MCF 10A (cell line): ENCODE measurements at regions of chr15 and their contacts with region 1.

Region 1: DNA sequence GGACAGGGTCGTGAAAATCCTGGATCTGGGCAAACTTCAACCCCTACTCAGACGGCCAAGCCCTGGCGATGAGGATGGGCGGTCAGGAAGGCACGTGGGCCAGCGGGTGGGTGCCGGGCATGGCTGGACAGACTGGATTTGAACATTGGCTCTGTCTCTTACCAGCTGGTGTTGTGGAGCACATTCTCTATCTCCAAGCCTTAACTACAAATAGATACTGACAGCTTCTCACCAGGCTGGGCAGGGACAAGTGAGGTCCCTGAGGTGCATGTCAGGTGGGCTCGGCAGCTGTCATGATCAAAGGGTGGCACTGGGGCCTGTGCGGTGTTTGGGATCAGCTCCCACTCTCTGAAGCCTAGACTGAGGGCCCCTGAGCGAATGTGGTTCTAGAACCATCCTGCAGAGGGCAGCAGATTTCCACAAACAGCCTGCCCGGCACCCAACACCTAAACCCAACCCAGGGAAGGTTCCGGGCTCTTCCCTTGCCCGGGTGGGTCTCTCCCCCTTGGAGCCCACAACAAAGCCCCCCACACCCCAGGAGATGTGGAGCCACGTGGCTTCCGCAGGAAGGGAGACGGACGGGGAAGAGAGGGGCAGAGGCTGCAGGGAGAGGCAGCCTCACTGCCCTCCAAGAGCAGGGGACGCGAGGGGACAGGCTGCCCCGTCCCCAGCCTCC is 58.4 kb downstream of the RGMA start:
- DNase-seq: peak; percentile 81
- H3K4me3 Mint-ChIP-seq: peak overlapping the region; percentile 44
- H3K27ac Mint-ChIP-seq: peak overlapping the region; percentile 95
- H3K4me1 Mint-ChIP-seq: peaks cover 38% of the 10 kb centered on the region
- H3K27me3 Mint-ChIP-seq: no peaks in the 10 kb centered on the region
- CTCF ChIP-seq: peak; percentile 86

Region 2: DNA sequence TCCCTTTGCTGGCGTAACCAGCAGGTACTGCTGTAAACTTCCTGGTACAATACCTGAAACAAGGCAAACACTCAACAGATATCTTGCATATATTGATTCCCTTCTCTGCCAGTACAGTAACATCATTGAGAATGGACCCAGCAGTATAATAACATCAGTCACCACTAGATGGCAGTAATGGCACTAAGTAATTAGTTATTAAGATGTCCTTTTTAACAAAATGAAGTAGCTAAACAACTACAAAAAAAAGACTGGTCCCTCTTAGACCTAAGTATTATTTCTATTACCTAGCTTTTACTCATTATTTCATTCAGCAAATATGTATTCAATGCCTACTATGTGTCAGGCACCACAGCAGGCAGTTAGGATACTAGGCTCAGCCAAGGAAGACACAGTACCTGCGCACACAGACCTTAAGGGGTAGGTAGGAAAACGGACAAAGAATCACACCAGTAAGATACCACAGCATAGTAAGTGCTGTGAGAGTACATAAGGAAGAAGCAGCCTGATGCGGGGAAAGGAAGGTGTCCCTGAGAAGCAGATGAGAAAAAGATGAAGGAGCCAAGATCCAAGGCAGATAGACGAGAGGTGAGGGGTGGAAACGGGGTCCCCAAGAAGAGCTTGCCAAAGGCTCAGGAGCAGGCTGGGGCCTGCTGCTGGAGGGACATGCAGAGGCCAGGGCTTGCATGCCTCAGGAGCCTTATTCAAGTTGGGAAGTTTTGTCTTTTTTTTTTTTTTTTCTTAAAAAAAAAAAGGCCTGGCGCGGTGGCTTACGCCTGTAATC is 233.2 kb before region 1 on chr15:
- CTCF ChIA-PET with region 1: interaction called, 28 read pairs
- POLR2A ChIA-PET with region 1: interaction called, 3 read pairs
- intact Hi-C with region 1: no loop called
- DNase-seq: peak; percentile 76
- H3K4me3 Mint-ChIP-seq: no peak overlapping the region
- H3K27ac Mint-ChIP-seq: peak overlapping the region; percentile 84
- H3K4me1 Mint-ChIP-seq: peaks cover 18% of the 10 kb centered on the region
- H3K27me3 Mint-ChIP-seq: no peaks in the 10 kb centered on the region
- CTCF ChIP-seq: peak; percentile 53

Region 3: DNA sequence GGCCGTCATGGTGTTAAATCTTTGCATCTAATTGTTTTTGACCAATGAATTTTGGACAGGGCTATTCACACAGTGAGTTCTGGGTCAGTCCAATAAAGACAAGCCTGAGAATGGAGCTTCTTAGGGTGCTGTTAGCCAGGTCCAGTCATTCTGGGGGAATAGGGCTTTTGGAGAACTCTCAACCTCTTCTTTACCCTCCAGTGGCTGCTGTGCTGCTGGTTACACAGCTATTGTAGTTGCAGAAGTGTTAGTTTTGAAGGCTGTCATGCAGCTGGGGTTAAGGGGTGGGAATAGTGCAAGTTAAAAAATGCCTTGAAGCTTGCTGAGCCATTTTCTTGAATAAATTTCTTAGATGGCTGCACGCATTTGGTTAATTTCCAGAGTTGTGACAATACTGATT is 40.5 kb before region 1 on chr15:
- CTCF ChIA-PET with region 1: no interaction called
- POLR2A ChIA-PET with region 1: no interaction called
- intact Hi-C with region 1: no loop called
- DNase-seq: no peak
- H3K4me3 Mint-ChIP-seq: no peak overlapping the region
- H3K27ac Mint-ChIP-seq: no peak overlapping the region
- H3K4me1 Mint-ChIP-seq: peaks cover 6% of the 10 kb centered on the region
- H3K27me3 Mint-ChIP-seq: no peaks in the 10 kb centered on the region
- CTCF ChIP-seq: no peak

Region 4: DNA sequence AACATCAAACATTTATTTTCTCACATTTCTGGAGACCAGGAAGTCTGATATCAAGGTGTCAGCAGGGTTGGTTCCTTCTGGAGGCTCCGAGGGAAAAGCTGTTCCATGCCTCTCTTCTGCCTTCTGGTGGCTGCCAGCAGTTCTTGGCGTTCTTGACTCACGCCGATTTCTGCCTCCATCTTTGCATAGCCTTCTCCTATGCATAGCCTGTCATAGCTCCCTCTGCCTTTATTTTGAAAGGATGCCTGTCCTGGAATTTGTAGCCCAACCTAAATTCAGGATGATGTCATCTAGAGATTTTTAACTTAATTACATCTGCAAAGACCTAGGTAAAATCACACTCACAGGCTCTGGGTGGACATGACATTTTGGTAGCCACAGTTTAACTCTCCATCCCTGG is 12.0 kb before region 1 on chr15:
- CTCF ChIA-PET with region 1: interaction called, 5 read pairs
- POLR2A ChIA-PET with region 1: interaction called, 15 read pairs
- intact Hi-C with region 1: no loop called
- DNase-seq: no peak
- H3K4me3 Mint-ChIP-seq: no peak overlapping the region
- H3K27ac Mint-ChIP-seq: no peak overlapping the region
- H3K4me1 Mint-ChIP-seq: peaks cover 24% of the 10 kb centered on the region
- H3K27me3 Mint-ChIP-seq: no peaks in the 10 kb centered on the region
- CTCF ChIP-seq: no peak

Region 5: DNA sequence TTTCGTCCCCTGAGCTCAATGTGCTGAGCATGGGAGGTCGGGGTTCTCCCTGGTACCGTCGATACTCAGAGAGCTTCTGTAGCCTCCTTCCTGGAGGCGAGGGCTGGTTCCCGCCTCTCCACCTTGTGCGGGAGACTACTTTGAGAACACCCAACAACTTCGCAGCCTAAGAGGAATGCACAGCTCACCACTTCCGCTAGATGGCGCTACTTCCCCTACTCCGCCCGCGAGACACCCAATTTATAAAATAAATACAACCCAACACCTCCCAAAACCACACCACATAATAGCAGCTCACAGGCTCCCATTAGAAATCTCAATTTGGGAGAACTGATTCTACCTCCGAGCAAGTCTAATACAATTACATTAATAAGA is 57.2 kb after region 1 on chr15:
- CTCF ChIA-PET with region 1: interaction called, 20 read pairs
- POLR2A ChIA-PET with region 1: no interaction called
- intact Hi-C with region 1: loop called (anchors 2 kb)
- DNase-seq: peak; percentile 80
- H3K4me3 Mint-ChIP-seq: peak overlapping the region; percentile 69
- H3K27ac Mint-ChIP-seq: no peak overlapping the region
- H3K4me1 Mint-ChIP-seq: no peaks in the 10 kb centered on the region
- H3K27me3 Mint-ChIP-seq: peaks cover 23% of the 10 kb centered on the region
- CTCF ChIP-seq: peak; percentile 88

Region 6: GRCh38 chr15:93283854-93284253 is 253.3 kb after region 1 on chr15:
- CTCF ChIA-PET with region 1: no interaction called
- POLR2A ChIA-PET with region 1: no interaction called
- intact Hi-C with region 1: no loop called
- DNase-seq: no peak
- H3K4me3 Mint-ChIP-seq: no peak overlapping the region
- H3K27ac Mint-ChIP-seq: no peak overlapping the region
- H3K4me1 Mint-ChIP-seq: no peaks in the 10 kb centered on the region
- H3K27me3 Mint-ChIP-seq: peaks cover 11% of the 10 kb centered on the region
- CTCF ChIP-seq: no peak

Region 7: GRCh38 chr15:93997084-93997918 is 966.7 kb after region 1 on chr15:
- CTCF ChIA-PET with region 1: interaction called, 9 read pairs
- POLR2A ChIA-PET with region 1: no interaction called
- intact Hi-C with region 1: loop called (anchors 1 kb)
- DNase-seq: peak; percentile 51
- H3K4me3 Mint-ChIP-seq: no peak overlapping the region
- H3K27ac Mint-ChIP-seq: no peak overlapping the region
- H3K4me1 Mint-ChIP-seq: no peaks in the 10 kb centered on the region
- H3K27me3 Mint-ChIP-seq: no peaks in the 10 kb centered on the region
- CTCF ChIP-seq: peak; percentile 80